ENCODE measurements at regions of chr16 and their contacts with region 1.

Region 1: GRCh38 chr16:87778830-87779579 is 13.2 kb upstream of the KLHDC4 start:
- DNase-seq: no peak
- ATAC-seq: peak; percentile 90
- H3K4me3 ChIP-seq: no peak overlapping the region
- H3K27ac ChIP-seq: peak overlapping the region; percentile 91
- H3K4me1 ChIP-seq: peaks cover 9% of the 10 kb centered on the region
- H3K27me3 ChIP-seq: no peaks in the 10 kb centered on the region
- CTCF ChIP-seq: peak; percentile 86

Region 2: DNA sequence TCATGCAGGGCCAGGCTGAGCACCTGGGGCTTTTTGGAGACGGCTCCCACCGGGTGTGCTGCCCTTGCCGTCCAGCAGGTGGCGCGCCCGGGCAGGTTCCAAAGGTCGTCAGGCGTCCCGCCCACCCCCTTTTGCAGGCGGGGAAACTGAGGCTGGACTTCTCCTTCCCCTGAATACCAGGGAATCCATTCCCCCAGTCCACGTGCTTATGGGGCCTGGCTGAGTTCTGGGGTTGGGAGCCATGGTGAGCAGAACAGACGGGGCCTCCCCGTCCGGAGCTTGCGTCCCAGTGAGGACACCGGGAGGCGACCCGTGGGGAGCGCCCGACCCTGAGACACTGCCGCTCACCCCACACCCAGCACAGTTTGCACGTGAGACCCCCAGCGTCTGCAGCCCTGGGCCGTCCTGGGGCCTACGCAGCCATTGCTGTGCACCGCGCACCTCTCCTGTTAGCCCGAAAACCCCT is 228.5 kb before region 1 on chr16:
- CTCF ChIA-PET with region 1: no interaction called
- POLR2A ChIA-PET with region 1: no interaction called
- in situ Hi-C with region 1: no loop called
- intact Hi-C with region 1: no loop called
- DNase-seq: peak; percentile 8
- ATAC-seq: peak; percentile 53; the same call in 1 of the 2 replicates
- H3K4me3 ChIP-seq: no peak overlapping the region
- H3K27ac ChIP-seq: no peak overlapping the region
- H3K4me1 ChIP-seq: no peaks in the 10 kb centered on the region; the same call in 1 of the 2 replicates
- H3K27me3 ChIP-seq: no peaks in the 10 kb centered on the region
- CTCF ChIP-seq: peak; percentile 94

Region 3: GRCh38 chr16:87834623-87835407 is 55.8 kb after region 1 on chr16:
- CTCF ChIA-PET with region 1: interaction called, 8 read pairs
- POLR2A ChIA-PET with region 1: no interaction called
- in situ Hi-C with region 1: no loop called
- intact Hi-C with region 1: loop called (anchors 5 kb)
- DNase-seq: no peak
- ATAC-seq: no peak
- H3K4me3 ChIP-seq: no peak overlapping the region
- H3K27ac ChIP-seq: peak overlapping the region; percentile 44
- H3K4me1 ChIP-seq: peaks cover 8% of the 10 kb centered on the region
- H3K27me3 ChIP-seq: no peaks in the 10 kb centered on the region
- CTCF ChIP-seq: no peak

Region 4: GRCh38 chr16:87874639-87875465 is 95.8 kb after region 1 on chr16:
- CTCF ChIA-PET with region 1: interaction called, 49 read pairs
- POLR2A ChIA-PET with region 1: interaction called, 7 read pairs
- in situ Hi-C with region 1: no loop called
- intact Hi-C with region 1: loop called (anchors 1 kb)
- DNase-seq: no peak
- ATAC-seq: no peak
- H3K4me3 ChIP-seq: no peak overlapping the region
- H3K27ac ChIP-seq: no peak overlapping the region
- H3K4me1 ChIP-seq: peaks cover 9% of the 10 kb centered on the region
- H3K27me3 ChIP-seq: no peaks in the 10 kb centered on the region
- CTCF ChIP-seq: no peak

Region 5: GRCh38 chr16:88347656-88348376 is 568.8 kb after region 1 on chr16:
- CTCF ChIA-PET with region 1: no interaction called
- POLR2A ChIA-PET with region 1: no interaction called
- in situ Hi-C with region 1: no loop called
- intact Hi-C with region 1: no loop called
- DNase-seq: no peak
- ATAC-seq: no peak
- H3K4me3 ChIP-seq: no peak overlapping the region
- H3K27ac ChIP-seq: no peak overlapping the region
- H3K4me1 ChIP-seq: no peaks in the 10 kb centered on the region
- H3K27me3 ChIP-seq: no peaks in the 10 kb centered on the region
- CTCF ChIP-seq: no peak

Measured in Panc1 (cell line).